ENCODE measurements at regions of chr1 and their contacts with region 1.

Region 1: DNA sequence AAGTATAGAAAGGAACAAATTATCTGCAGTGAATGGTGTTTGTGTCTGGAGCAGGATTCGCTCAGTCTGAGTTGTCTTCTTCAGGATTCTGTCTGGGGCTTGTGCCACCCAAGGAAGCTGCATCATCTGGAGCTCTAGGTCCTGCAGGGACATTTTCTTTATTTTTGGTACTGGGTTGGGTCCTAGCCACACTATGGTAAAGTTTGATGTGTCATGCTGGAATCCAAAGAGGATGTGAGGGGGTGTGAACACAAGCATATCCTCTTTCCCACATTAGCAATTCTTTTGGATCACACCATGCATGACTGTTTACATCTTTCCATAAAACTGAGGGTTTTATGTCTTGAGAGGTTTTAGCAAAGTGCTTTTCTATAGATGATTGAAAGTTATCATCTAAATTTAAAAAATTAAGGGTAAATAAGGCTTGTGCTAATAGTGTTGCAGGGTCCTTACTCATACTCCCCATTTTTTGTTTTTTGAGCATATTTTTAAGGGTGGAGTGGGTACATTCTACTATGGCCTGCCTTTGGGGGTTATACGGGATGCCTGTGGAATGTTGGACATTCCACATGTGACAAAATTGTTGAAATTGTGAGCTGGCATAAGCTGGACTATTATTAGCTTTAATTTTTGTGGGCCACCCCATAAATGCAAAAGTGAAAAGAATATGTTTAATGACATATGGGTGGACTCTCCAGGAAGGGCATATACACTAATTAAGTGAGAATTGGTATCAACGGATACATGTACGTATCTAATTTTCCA is 152.0 kb upstream of the HMCN1 start:
- DNase-seq: no peak
- H3K4me3 ChIP-seq: no peak overlapping the region
- H3K27ac ChIP-seq: no peak overlapping the region
- H3K4me1 ChIP-seq: no peaks in the 10 kb centered on the region
- H3K27me3 ChIP-seq: no peaks in the 10 kb centered on the region
- CTCF ChIP-seq: no peak

Region 2: GRCh38 chr1:185500001-185500626 is 82.0 kb before region 1 on chr1:
- CTCF ChIA-PET with region 1: no interaction called
- POLR2A ChIA-PET with region 1: interaction called, 22 read pairs
- intact Hi-C with region 1: no loop called
- DNase-seq: no peak
- H3K4me3 ChIP-seq: no peak overlapping the region
- H3K27ac ChIP-seq: no peak overlapping the region
- H3K4me1 ChIP-seq: no peaks in the 10 kb centered on the region
- H3K27me3 ChIP-seq: no peaks in the 10 kb centered on the region
- CTCF ChIP-seq: no peak